ENCODE measurements at regions of chr1 and their contacts with region 1.

Region 1: DNA sequence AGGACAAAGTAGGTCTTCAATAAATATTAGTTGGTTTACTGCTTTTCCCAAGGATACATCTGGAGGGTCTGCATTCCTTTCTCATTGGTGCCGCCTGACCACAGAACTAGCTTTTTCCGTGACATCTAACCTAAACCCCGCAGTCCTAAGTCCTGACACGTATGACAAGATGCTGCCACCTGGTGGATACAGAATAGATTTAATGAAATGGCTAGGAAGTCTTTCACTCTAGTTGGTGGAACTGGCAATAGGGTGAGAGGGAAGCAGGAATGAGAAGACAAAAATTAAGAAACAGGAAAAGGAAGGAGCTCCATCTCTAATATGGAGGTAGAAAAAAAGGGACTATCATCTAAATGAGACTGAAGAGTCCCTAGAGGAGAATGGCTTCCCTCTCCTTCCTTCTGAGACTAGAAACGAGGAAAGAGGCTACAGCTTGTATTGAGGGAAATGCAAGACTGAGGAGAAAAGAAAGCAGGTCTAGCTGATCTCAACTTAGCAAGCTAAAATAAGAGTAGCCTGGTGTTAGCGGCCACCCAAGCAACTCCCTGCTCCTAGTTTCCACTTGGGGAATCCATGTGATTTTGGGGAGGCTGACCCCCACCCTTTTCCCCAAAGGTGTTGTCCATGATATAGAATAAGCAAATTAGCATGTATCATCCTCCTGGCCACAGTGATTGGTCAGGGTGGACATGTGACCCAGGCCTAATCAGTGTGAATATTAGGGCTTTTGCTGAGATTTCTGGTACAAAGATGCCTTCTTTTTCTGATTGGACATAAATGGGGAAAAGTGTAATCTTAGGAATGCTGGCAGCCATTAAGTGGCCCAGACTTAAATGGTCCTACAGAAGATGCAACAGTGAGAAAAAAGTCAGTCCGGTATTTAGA is 5.9 kb downstream of the RFX5 start:
- DNase-seq: peak; percentile 81
- H3K4me3 ChIP-seq: no peak overlapping the region
- H3K27ac ChIP-seq: no peak overlapping the region
- H3K4me1 ChIP-seq: peaks cover 8% of the 10 kb centered on the region
- H3K27me3 ChIP-seq: no peaks in the 10 kb centered on the region
- CTCF ChIP-seq: peak; percentile 51 to 74
- POLR2A ChIP-seq: no peak

Region 2: GRCh38 chr1:151198255-151199127 is 142.6 kb before region 1 on chr1 and contains the start of gene PIP5K1A:
- CTCF ChIA-PET with region 1: interaction called, 9 read pairs
- POLR2A ChIA-PET with region 1: no interaction called
- dilution Hi-C with region 1: no loop called
- intact Hi-C with region 1: loop called (anchors 1 kb)
- DNase-seq: peak; percentile 98
- H3K4me3 ChIP-seq: peak within 1 kb of the TSS; percentile 86 to 96 (median 93)
- H3K27ac ChIP-seq: peak within 1 kb of the TSS; percentile 82
- H3K4me1 ChIP-seq: peaks cover 25% of the 10 kb centered on the region
- H3K27me3 ChIP-seq: no peaks in the 10 kb centered on the region
- CTCF ChIP-seq: no peak
- POLR2A ChIP-seq: peak; percentile 65
- total RNA-seq, gene PIP5K1A: 72.1 and 77.0 TPM in 2 replicates

Region 3: DNA sequence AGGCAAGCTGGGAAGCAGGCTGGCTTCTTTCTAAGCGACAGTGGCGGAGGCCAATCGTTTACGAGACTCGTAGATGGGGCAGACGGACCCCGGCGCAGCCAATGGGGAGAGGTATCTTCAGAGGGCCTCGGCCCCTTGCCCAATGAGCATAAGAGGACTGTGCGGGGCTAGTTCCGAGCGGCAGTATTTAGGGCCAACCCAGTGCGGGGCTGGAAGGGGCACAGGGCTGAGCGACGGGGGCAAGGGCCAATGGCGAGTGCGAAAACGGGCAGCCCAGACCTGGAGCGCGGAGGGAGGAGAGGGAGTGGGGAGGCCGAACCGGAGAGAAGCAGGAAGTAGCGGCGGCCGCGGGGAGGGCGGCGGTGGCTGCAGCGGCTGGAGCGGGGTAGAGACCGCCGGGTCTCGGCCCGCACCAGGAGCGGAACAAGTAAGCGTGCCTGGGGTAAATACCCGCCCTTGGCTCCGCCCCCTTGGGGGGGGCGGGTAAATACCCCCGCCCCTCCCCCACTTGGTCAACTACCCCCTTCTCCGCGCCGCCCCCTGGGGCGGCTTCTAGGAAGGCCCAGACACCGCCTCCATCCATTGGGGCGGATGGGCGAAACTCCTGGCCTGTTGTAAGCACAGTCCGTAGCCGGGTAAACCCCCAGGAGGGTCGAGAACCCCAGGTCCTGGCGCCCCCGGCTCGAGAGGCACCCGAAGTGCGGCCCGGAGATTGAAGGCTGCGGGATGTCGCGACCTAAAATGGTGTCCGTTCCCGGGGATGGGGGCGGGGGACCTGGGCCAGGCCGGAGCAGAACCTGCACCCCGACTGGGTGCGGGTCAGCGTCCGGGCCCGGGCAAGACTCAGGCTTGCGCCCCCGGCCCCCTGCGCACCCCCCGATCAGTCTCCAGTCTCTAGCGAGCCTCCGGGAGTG is 58.9 kb before region 1 on chr1 and contains the start of gene ZNF687:
- CTCF ChIA-PET with region 1: interaction called, 26 read pairs
- POLR2A ChIA-PET with region 1: no interaction called
- dilution Hi-C with region 1: no loop called
- intact Hi-C with region 1: loop called (anchors 1 kb)
- DNase-seq: peak; percentile 100
- H3K4me3 ChIP-seq: peak within 1 kb of the TSS; percentile 66 to 89 (median 69)
- H3K27ac ChIP-seq: peak within 1 kb of the TSS; percentile 81
- H3K4me1 ChIP-seq: peaks cover 9% of the 10 kb centered on the region
- H3K27me3 ChIP-seq: peaks cover 0 to 2% of the 10 kb centered on the region in 2 experiments
- CTCF ChIP-seq: no peak
- POLR2A ChIP-seq: peak; percentile 76
- total RNA-seq, gene ZNF687: 15.5 and 17.9 TPM in 2 replicates

Region 4: DNA sequence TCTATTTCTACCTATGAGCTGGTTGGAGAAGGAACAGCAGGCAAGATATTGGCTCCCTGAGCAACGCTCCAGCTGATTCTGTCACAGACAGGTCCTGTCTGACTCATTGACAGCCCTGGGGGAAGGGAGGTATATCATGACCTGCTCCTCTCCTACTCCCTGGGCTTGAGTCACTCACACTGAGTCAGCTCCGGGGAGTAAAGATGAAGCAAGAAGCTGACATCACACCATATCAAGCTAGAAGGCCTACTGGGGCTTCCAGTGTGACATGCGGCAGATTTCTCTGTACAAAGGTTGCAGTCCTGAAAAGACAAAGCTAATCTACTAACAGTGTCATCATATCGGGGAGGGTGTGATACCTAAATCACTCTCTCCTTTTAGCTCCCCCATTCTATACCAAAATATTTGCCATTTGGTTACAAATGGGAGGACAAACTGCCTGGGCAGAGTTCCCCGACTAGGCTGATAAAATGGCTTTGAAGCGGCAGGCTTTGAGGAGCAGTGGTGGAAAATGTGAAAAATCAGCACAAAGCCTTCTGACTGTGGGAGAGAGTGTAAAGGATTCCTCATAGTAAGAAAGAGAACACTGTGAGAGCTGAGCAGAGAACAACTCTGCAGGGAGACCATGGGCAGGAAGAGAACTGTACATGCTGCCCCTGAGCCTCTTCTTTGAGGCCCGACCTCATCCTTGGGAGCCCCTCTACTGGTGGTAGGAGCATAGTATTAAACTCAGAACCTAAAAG is 29.4 kb before region 1 on chr1:
- CTCF ChIA-PET with region 1: interaction called, 674 read pairs
- POLR2A ChIA-PET with region 1: interaction called, 3 read pairs
- dilution Hi-C with region 1: no loop called
- intact Hi-C with region 1: no loop called
- DNase-seq: peak; percentile 86
- H3K4me3 ChIP-seq: no peak overlapping the region
- H3K27ac ChIP-seq: peak overlapping the region; percentile 81
- H3K4me1 ChIP-seq: peaks cover 37% of the 10 kb centered on the region
- H3K27me3 ChIP-seq: no peaks in the 10 kb centered on the region
- CTCF ChIP-seq: no peak
- POLR2A ChIP-seq: no peak

Region 5: GRCh38 chr1:151327223-151327902 is 13.7 kb before region 1 on chr1 and contains the start of gene PI4KB:
- CTCF ChIA-PET with region 1: interaction called, 103 read pairs
- POLR2A ChIA-PET with region 1: interaction called, 4 read pairs
- dilution Hi-C with region 1: no loop called
- intact Hi-C with region 1: loop called (anchors 2 kb)
- DNase-seq: peak; percentile 98
- H3K4me3 ChIP-seq: peak within 1 kb of the TSS; percentile 63 to 86 (median 83)
- H3K27ac ChIP-seq: peak within 1 kb of the TSS; percentile 93
- H3K4me1 ChIP-seq: peaks cover 22% of the 10 kb centered on the region
- H3K27me3 ChIP-seq: no peaks in the 10 kb centered on the region
- CTCF ChIP-seq: no peak
- POLR2A ChIP-seq: peak; percentile 68
- total RNA-seq, gene PI4KB: 58.3 and 60.9 TPM in 2 replicates

Region 6: DNA sequence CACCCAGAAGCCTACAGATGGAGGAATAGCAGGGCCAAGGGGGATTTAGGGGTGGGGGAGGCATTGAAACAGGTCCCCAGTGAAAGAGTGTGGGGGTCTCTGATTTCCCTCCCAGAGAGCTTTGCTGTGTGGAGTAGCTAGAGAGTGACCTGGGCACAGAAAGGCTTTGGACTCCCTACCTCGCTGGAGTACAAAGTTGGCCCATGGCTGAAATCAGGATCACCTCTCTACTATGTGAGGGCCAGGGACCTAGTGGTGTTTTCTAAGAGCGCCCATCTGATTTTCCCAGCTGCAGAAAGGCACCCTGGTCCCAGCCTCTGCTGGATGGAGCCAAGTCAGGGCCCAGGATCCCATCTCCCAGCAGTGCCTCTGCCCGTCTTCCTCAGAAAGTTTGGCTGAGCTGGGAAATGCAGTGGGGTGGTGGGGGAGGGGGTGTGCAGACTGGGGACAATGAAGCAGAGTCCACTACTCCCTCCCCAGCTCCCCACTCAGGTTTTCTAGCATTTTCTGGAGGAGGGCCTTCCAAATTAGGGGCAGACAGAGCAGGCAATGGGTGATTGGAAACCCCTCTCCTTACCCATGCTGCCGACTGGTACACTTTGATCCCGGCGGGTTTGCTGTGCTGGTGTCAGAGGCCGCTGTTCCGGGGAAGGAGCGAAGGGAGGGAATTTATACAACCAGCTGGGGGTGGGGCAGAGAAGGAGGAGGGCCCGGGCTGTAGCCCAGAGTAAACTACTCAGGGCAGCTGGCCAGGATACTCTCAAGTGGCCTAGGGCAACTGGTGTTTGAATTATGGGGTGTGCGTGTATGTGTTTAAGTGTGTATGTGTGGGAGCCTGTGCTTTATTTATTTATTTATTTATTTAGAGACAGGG is 31.2 kb after region 1 on chr1 and contains the start of gene SELENBP1:
- CTCF ChIA-PET with region 1: interaction called, 10 read pairs
- POLR2A ChIA-PET with region 1: no interaction called
- dilution Hi-C with region 1: no loop called
- intact Hi-C with region 1: no loop called
- DNase-seq: peak; percentile 64
- H3K4me3 ChIP-seq: peak within 1 kb of the TSS in 1 of 3 experiments; percentile 29
- H3K27ac ChIP-seq: no peak within 1 kb of the TSS
- H3K4me1 ChIP-seq: peaks cover 8% of the 10 kb centered on the region
- H3K27me3 ChIP-seq: no peaks in the 10 kb centered on the region
- CTCF ChIP-seq: no peak
- POLR2A ChIP-seq: peak; percentile 52
- total RNA-seq, gene SELENBP1: 12.4 and 18.0 TPM in 2 replicates